ENCODE measurements at regions of chr4 and their contacts with region 1.

Region 1: GRCh38 chr4:81471588-81472288 is at the start of gene RASGEF1B:
- DNase-seq: peak; percentile 92 to 97 (median 96)
- H3K4me3 ChIP-seq: peak within 1 kb of the TSS; percentile 75 to 97 (median 93)
- H3K27ac ChIP-seq: peak within 1 kb of the TSS; percentile 86 to 94
- H3K4me1 ChIP-seq: peaks cover 24 to 46% (median 29%) of the 10 kb centered on the region in 4 experiments
- H3K27me3 ChIP-seq: no peaks in the 10 kb centered on the region

Region 2: GRCh38 chr4:81398379-81398778 is 73.4 kb before region 1 on chr4:
- CTCF ChIA-PET with region 1: no interaction called
- POLR2A ChIA-PET with region 1: no interaction called
- DNase-seq: no peak
- H3K4me3 ChIP-seq: no peak overlapping the region
- H3K27ac ChIP-seq: no peak overlapping the region
- H3K4me1 ChIP-seq: no peaks in the 10 kb centered on the region
- H3K27me3 ChIP-seq: no peaks in the 10 kb centered on the region

Region 3: GRCh38 chr4:81486502-81486901 is 14.8 kb after region 1 on chr4:
- CTCF ChIA-PET with region 1: interaction called, 17 read pairs
- POLR2A ChIA-PET with region 1: interaction called, 4 read pairs
- DNase-seq: no peak
- H3K4me3 ChIP-seq: no peak overlapping the region
- H3K27ac ChIP-seq: no peak overlapping the region
- H3K4me1 ChIP-seq: peaks cover 3 to 19% (median 12%) of the 10 kb centered on the region in 4 experiments
- H3K27me3 ChIP-seq: no peaks in the 10 kb centered on the region

Region 4: GRCh38 chr4:81505004-81505598 is 33.4 kb after region 1 on chr4:
- CTCF ChIA-PET with region 1: interaction called, 15 read pairs
- POLR2A ChIA-PET with region 1: interaction called, 16 read pairs
- DNase-seq: peak; percentile 93 to 100 (median 98)
- H3K4me3 ChIP-seq: peak overlapping the region in 3 of 7 experiments; percentile 39 to 43 (median 40)
- H3K27ac ChIP-seq: peak overlapping the region; percentile 68 to 85
- H3K4me1 ChIP-seq: peaks cover 31 to 70% (median 63%) of the 10 kb centered on the region in 4 experiments
- H3K27me3 ChIP-seq: no peaks in the 10 kb centered on the region

Region 5: GRCh38 chr4:81688085-81688484 is 216.3 kb after region 1 on chr4:
- CTCF ChIA-PET with region 1: interaction called, 22 read pairs
- POLR2A ChIA-PET with region 1: no interaction called
- DNase-seq: peak; percentile 28 to 62 (median 57)
- H3K4me3 ChIP-seq: no peak overlapping the region
- H3K27ac ChIP-seq: no peak overlapping the region
- H3K4me1 ChIP-seq: no peaks in the 10 kb centered on the region
- H3K27me3 ChIP-seq: no peaks in the 10 kb centered on the region

Region 6: GRCh38 chr4:81844717-81845116 is 373.0 kb after region 1 on chr4:
- CTCF ChIA-PET with region 1: interaction called, 66 read pairs
- POLR2A ChIA-PET with region 1: interaction called, 3 read pairs
- DNase-seq: peak; percentile 86 to 96 (median 94)
- H3K4me3 ChIP-seq: no peak overlapping the region
- H3K27ac ChIP-seq: no peak overlapping the region
- H3K4me1 ChIP-seq: peaks cover 0 to 8% (median 2%) of the 10 kb centered on the region in 4 experiments
- H3K27me3 ChIP-seq: no peaks in the 10 kb centered on the region